ENCODE measurements at regions of chr5 and their contacts with region 1.

Region 1: GRCh38 chr5:177113566-177114424 is 19.8 kb upstream of the NSD1 start:
- DNase-seq: peak; percentile 78
- H3K4me3 ChIP-seq: no peak overlapping the region
- H3K27ac ChIP-seq: no peak overlapping the region
- H3K4me1 ChIP-seq: no peaks in the 10 kb centered on the region
- H3K27me3 ChIP-seq: no peaks in the 10 kb centered on the region
- CTCF ChIP-seq: peak; percentile 96 to 97
- POLR2A ChIP-seq: no peak

Region 2: GRCh38 chr5:176810084-176810597 is 303.7 kb before region 1 on chr5 and contains the start of gene UNC5A:
- CTCF ChIA-PET with region 1: interaction called, 12 read pairs
- POLR2A ChIA-PET with region 1: no interaction called
- dilution Hi-C with region 1: no loop called
- intact Hi-C with region 1: no loop called
- DNase-seq: peak; percentile 16
- H3K4me3 ChIP-seq: peak within 1 kb of the TSS in 2 of 3 experiments; percentile 18 to 22
- H3K27ac ChIP-seq: no peak within 1 kb of the TSS
- H3K4me1 ChIP-seq: peaks cover 3% of the 10 kb centered on the region
- H3K27me3 ChIP-seq: peaks cover 18 to 25% of the 10 kb centered on the region in 2 experiments
- CTCF ChIP-seq: no peak
- POLR2A ChIP-seq: no peak
- total RNA-seq, gene UNC5A: 0.22 and 0.51 TPM in 2 replicates

Region 3: DNA sequence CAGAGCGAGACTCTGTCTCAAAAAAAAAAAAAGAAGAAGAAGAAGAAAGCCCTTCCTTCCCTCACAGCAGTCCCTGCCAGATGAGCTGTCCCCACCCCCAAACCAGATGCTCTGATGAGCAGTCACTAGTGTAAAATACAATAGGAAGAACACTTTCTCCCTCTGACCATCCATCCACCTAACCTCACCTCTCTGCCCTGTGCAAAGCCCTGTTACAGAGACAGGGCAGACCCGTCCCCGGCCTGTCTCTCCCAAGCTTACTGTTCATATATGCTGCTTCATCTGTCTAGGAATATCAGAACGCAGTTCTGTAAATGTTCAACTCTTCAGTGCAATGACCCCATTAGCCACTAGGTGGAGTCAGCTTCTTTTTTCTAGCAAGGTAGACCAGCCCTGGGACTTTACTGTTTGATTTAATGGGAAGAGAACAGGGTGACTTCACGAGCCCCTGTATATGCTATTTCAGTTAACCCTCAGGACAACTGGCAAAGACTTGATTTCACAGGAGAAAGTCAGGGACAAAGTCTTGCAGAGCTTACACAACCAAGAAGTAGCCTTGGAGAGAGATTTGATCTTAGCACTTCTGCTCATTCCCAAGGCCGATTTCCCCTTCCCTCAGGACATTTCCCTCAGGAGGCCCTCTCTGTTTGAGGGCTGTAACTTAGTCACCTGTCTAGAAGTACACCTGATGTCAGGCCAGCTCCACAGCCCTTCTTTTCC is 42.0 kb before region 1 on chr5:
- CTCF ChIA-PET with region 1: interaction called, 274 read pairs
- POLR2A ChIA-PET with region 1: no interaction called
- dilution Hi-C with region 1: no loop called
- intact Hi-C with region 1: loop called (anchors 1 kb)
- DNase-seq: peak; percentile 86
- H3K4me3 ChIP-seq: no peak overlapping the region
- H3K27ac ChIP-seq: no peak overlapping the region
- H3K4me1 ChIP-seq: no peaks in the 10 kb centered on the region
- H3K27me3 ChIP-seq: no peaks in the 10 kb centered on the region
- CTCF ChIP-seq: peak; percentile 77 to 80
- POLR2A ChIP-seq: no peak

Region 4: DNA sequence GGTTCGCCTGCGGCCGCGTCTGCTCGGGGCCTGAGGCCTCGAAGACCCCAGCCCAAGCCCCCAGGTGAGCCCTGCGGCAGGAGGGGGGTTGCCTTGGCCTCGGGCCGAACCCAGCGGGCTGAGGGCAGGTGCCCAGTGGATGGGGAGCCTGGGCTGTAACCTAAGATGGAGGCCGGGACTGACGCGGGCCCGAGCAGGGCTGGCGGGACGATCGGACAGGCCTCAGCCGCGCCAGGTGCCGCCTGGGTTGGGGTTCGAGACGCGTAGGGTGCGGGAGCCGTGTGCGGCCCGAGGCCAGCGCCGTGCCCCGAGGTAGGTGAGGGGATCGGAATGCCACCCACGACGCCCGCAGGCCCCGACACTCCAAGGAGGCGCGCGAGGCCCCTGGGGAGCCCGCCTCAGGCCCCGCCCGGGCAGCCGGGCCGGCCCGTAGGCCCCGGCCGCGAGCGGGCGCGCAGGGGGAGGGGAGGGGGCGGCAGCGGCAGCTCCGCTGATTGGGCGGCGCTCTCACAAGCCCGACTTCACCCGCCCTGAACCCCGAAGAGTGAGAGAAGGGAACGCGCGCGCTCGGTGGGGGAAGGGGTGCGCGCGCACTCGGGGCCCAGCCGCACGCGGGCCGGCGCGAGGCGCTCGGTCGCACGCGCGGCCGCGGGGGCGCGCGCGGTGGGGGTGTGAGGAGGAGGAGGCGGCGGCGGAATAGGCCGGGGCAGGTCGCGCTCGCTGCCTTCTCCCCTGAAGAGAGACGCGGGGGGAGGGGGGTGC is 19.5 kb after region 1 on chr5 and contains the start of gene NSD1:
- CTCF ChIA-PET with region 1: interaction called, 7 read pairs
- POLR2A ChIA-PET with region 1: no interaction called
- dilution Hi-C with region 1: no loop called
- intact Hi-C with region 1: loop called (anchors 2 kb)
- DNase-seq: peak; percentile 75
- H3K4me3 ChIP-seq: peak within 1 kb of the TSS; percentile 25 to 81 (median 66)
- H3K27ac ChIP-seq: peak within 1 kb of the TSS; percentile 30
- H3K4me1 ChIP-seq: peaks cover 43% of the 10 kb centered on the region
- H3K27me3 ChIP-seq: no peaks in the 10 kb centered on the region
- CTCF ChIP-seq: no peak
- POLR2A ChIP-seq: peak; percentile 78
- total RNA-seq, gene NSD1: 76.1 and 90.4 TPM in 2 replicates

Region 5: GRCh38 chr5:177303121-177303924 is 189.5 kb after region 1 on chr5 and contains the starts of genes PRELID1 and RAB24:
- CTCF ChIA-PET with region 1: interaction called, 45 read pairs
- POLR2A ChIA-PET with region 1: no interaction called
- dilution Hi-C with region 1: no loop called
- intact Hi-C with region 1: loop called (anchors 1 kb)
- DNase-seq: peak; percentile 84
- H3K4me3 ChIP-seq: peak within 1 kb of the TSS; percentile 58 to 87 (median 80)
- H3K27ac ChIP-seq: peak within 1 kb of the TSS; percentile 65
- H3K4me1 ChIP-seq: peaks cover 35% of the 10 kb centered on the region
- H3K27me3 ChIP-seq: no peaks in the 10 kb centered on the region
- CTCF ChIP-seq: peak in 1 of 2 donors; percentile 49
- POLR2A ChIP-seq: peak; percentile 45
- total RNA-seq, gene PRELID1: 201 and 203 TPM in 2 replicates
- total RNA-seq, gene RAB24: 20.6 and 20.7 TPM in 2 replicates

Region 6: DNA sequence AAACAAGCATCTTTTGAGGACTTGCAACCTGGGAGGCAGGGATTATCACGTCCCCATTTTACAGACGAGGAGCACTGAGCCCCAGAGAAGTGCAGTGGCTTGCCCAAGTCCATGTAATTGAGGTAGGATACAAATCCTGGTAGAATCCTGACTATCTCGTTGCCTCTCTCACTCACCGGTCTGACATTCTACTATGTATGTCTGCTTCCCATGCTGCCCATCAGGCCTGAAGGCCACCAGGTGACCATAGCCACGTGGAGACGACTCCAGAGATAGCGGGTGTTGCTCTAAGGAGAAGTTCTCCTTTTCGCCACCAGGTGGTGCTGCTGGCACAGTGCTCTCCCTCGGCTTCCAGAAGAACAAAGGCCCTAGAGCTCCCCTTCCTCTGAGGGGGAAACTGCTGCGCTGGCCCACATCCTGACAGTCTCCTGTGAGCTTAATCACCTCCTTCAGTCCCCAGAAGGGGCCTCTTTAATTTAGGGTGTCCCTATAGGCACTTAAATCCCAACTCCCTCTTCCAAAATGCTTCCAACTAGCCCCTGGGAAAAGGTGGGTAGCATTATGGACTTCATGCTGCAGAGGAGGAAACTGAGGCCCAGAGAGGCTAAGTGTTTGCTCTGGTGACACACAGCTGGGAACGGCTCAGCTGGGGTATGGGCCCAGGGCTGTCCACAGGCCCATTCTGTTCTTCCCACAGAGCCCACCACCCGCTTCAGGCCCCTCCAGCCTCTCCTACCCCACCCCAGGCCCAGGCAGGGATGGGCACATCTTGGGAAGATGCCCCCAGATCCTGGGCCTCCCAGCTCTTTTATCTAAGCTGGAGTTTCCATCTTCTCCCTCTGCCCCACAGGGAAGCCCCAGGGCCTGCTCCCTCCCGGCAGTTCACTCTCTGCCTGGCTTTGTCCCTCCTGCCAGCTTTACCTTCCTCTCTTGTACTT is 276.8 kb after region 1 on chr5:
- CTCF ChIA-PET with region 1: interaction called, 19 read pairs
- POLR2A ChIA-PET with region 1: no interaction called
- dilution Hi-C with region 1: no loop called
- intact Hi-C with region 1: loop called (anchors 5 kb)
- DNase-seq: peak; percentile 88
- H3K4me3 ChIP-seq: no peak overlapping the region
- H3K27ac ChIP-seq: no peak overlapping the region
- H3K4me1 ChIP-seq: no peaks in the 10 kb centered on the region
- H3K27me3 ChIP-seq: no peaks in the 10 kb centered on the region
- CTCF ChIP-seq: peak; percentile 90 to 92
- POLR2A ChIP-seq: no peak

Region 7: GRCh38 chr5:177497292-177498033 is 383.7 kb after region 1 on chr5 and contains the start of gene PDLIM7:
- CTCF ChIA-PET with region 1: no interaction called
- POLR2A ChIA-PET with region 1: interaction called, 4 read pairs
- dilution Hi-C with region 1: no loop called
- intact Hi-C with region 1: loop called (anchors 2 kb)
- DNase-seq: peak; percentile 98
- H3K4me3 ChIP-seq: peak within 1 kb of the TSS; percentile 47 to 79 (median 74)
- H3K27ac ChIP-seq: peak within 1 kb of the TSS; percentile 93
- H3K4me1 ChIP-seq: peaks cover 42% of the 10 kb centered on the region
- H3K27me3 ChIP-seq: no peaks in the 10 kb centered on the region
- CTCF ChIP-seq: no peak
- POLR2A ChIP-seq: peak; percentile 99
- total RNA-seq, gene PDLIM7: 318 and 371 TPM in 2 replicates